Sigmoid colon (tissue), 7 donors: ENCODE measurements at regions of chrX and their contacts with region 1.

Region 1: DNA sequence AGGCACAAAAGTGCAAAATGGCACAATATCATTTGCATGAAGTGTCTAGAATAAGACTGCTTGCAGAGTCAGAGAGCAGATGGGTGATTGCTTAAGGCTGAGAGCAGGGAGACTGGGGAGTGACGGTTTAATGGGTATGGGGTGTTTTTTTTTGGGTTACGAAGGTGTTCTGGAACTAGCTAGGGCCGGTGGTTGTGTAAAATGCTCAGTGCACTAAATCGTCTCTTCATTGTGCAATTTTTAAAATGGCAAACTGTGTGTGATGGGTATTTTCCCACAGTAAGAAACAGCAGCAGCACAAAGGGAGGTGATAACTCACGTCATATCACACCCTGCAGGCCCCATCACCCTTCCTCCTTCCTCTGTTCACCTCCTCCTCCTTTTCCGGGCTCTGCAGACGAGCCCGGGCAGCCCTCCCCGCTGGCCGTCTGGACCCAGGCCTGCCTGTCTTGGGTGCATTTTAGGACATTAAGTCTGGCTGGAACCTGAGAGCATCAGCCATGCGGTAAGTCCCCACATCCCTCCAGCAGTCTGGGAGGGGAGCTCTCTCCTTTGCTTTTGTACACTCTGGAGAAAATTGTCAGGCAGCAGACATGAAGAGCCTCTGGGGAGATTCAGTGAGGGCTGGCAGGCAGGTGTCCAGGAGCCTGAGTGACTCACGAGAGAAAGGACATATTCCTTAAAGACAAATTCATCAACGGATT is 42.7 kb downstream of the ASMT start:
- DNase-seq: no peak
- H3K4me3 ChIP-seq: no peak overlapping the region
- H3K27ac ChIP-seq: no peak overlapping the region
- H3K4me1 ChIP-seq: no peaks in the 10 kb centered on the region
- H3K27me3 ChIP-seq: no peaks in the 10 kb centered on the region
- CTCF ChIP-seq: no peak
- EP300 ChIP-seq: no peak
- POLR2A ChIP-seq: no peak

Region 2: GRCh38 chrX:1598874-1599790 is 58.4 kb before region 1 on chrX:
- intact Hi-C with region 1: no loop called
- DNase-seq: no peak
- H3K4me3 ChIP-seq: no peak overlapping the region
- H3K27ac ChIP-seq: no peak overlapping the region
- H3K4me1 ChIP-seq: peaks cover 0 to 10% (median 2%) of the 10 kb centered on the region in 4 donors
- H3K27me3 ChIP-seq: no peaks in the 10 kb centered on the region
- CTCF ChIP-seq: no peak
- EP300 ChIP-seq: no peak
- POLR2A ChIP-seq: no peak

Region 3: GRCh38 chrX:1700757-1701156 is 43.2 kb after region 1 on chrX:
- intact Hi-C with region 1: no loop called
- DNase-seq: no peak
- H3K4me3 ChIP-seq: no peak overlapping the region
- H3K27ac ChIP-seq: no peak overlapping the region
- H3K4me1 ChIP-seq: no peaks in the 10 kb centered on the region
- H3K27me3 ChIP-seq: no peaks in the 10 kb centered on the region
- CTCF ChIP-seq: no peak
- EP300 ChIP-seq: no peak
- POLR2A ChIP-seq: no peak

Region 4: GRCh38 chrX:2595258-2595657 is 937.7 kb after region 1 on chrX:
- intact Hi-C with region 1: loop called (anchors 1 kb)
- DNase-seq: no peak
- H3K4me3 ChIP-seq: no peak overlapping the region
- H3K27ac ChIP-seq: no peak overlapping the region
- H3K4me1 ChIP-seq: peaks cover 0 to 4% (median 0%) of the 10 kb centered on the region in 4 donors
- H3K27me3 ChIP-seq: no peaks in the 10 kb centered on the region
- CTCF ChIP-seq: no peak
- EP300 ChIP-seq: no peak
- POLR2A ChIP-seq: no peak